Colonic mucosa (tissue), 4 donors: ENCODE measurements at regions of chr4 and their contacts with region 1.

Region 1: DNA sequence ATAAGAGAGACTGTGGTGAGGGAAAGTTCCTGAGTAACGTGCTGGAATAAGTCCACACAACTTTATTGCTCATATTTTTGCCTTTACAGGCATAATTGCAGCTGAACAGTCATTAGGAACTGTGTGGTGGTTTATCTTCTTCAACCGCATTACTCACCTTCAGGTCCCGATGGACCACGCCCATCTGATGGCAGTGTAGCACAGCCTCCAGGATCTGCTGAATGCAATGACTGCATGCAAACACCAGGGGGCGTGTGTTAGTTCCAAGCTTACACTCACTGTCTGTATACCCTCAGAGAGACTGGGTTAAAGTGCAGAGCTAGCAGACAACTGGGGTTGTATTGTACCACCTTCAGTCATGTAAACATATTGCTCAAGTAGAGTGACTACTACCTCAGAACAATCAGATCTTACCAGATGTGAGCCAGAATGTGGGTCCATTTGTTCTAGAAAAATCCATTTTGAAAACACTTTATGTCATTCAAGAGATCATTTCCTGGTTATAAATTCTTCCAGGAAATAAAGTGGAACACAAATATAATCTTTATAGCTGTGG is 214.0 kb downstream of the CAMK2D start:
- DNase-seq: peak; percentile 95
- H3K4me3 ChIP-seq: no peak overlapping the region
- H3K27ac ChIP-seq: peak overlapping the region; percentile 70
- H3K4me1 ChIP-seq: no peaks in the 10 kb centered on the region
- H3K27me3 ChIP-seq: no peaks in the 10 kb centered on the region
- CTCF ChIP-seq: peak; percentile 99

Region 2: DNA sequence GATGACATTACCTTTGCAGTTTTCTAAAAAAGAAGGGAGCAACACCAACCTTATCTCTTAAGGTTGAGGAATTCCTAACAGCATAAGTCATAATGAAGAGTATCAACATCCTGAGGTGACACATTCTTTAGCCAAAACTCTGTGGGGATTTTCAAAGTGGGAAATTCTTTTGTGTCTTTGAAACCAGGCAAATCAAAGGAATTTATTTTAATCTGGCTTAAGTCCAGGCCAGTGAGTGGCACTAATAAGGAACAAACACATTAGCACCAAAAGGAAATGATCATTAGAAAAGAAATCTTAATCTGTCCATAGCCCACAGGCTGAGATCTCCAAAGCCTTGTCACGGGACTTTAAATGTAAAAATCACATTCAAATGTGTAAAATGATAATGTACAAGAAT is 800.5 kb before region 1 on chr4:
- intact Hi-C with region 1: no loop called
- DNase-seq: no peak
- H3K4me3 ChIP-seq: no peak overlapping the region
- H3K27ac ChIP-seq: no peak overlapping the region
- H3K4me1 ChIP-seq: no peaks in the 10 kb centered on the region
- H3K27me3 ChIP-seq: no peaks in the 10 kb centered on the region
- CTCF ChIP-seq: no peak

Region 3: DNA sequence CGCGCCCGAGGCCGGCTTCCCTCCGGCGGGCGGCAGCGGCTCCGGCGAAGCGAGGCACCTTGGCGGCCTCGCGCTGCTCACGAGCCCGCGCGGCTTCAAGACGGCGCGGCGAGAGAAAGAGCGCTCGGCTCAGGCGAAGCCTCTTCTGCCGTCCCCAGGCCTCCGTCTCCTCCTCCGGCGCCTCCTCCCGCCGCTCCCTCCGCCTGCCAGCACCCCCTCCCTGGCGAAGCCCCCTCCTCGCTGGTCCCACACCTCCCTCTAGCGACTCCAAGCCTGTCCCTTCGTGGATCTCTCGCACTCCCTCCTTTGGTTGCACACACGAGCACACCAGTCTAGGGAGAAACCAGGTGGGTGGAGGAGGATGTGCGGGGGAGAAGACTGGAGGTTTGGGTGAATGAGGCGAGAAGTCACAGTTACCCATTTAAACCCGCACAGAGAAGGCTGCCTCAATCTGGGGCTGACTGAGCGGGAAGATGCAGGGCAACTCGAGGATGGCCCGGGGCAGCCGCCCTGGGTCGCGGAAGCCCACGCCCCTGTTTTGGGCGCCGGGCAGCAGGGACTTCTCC is 214.1 kb after region 1 on chr4 and contains the start of gene CAMK2D:
- intact Hi-C with region 1: loop called (anchors 2 kb)
- DNase-seq: peak; percentile 91
- H3K4me3 ChIP-seq: peak within 1 kb of the TSS; percentile 78
- H3K27ac ChIP-seq: peak within 1 kb of the TSS; percentile 100
- H3K4me1 ChIP-seq: no peaks in the 10 kb centered on the region
- H3K27me3 ChIP-seq: no peaks in the 10 kb centered on the region
- CTCF ChIP-seq: peak; percentile 34
- total RNA-seq, gene CAMK2D: 69.5 to 109 TPM